ENCODE measurements at regions of chr11 and their contacts with region 1.

Region 1: GRCh38 chr11:88117281-88117858 is 57.9 kb downstream of the RAB38 start:
- DNase-seq: no peak
- H3K4me3 ChIP-seq: no peak overlapping the region
- H3K27ac ChIP-seq: no peak overlapping the region
- H3K4me1 ChIP-seq: no peaks in the 10 kb centered on the region
- H3K27me3 ChIP-seq: no peaks in the 10 kb centered on the region
- CTCF ChIP-seq: no peak

Region 2: GRCh38 chr11:88174709-88175568 is 57.6 kb after region 1 on chr11 and contains the start of gene RAB38:
- intact Hi-C with region 1: no loop called
- DNase-seq: peak; percentile 61
- H3K4me3 ChIP-seq: peak within 1 kb of the TSS; percentile 38
- H3K27ac ChIP-seq: no peak within 1 kb of the TSS
- H3K4me1 ChIP-seq: no peaks in the 10 kb centered on the region
- H3K27me3 ChIP-seq: no peaks in the 10 kb centered on the region
- CTCF ChIP-seq: no peak
- total RNA-seq, gene RAB38: 1.6 to 4.9 TPM

Region 3: DNA sequence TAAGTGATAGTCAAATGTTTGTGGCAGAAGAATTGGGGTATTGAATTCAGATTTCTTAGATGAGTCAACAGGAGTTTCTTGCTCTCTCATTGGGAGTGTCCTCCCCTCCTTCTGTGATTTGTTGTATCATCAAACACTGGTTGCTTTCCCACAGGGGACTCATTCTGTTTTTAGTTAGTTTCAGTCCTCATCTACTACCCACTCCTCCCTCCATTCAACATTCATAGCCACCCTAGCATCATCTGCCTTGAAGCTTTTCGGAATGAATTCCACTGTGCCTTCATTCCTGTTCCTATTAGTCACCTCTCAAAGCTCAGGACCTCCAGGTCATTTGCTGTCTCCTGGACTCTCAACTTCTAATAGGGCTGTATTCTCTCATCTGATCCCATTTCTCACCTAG is 89.4 kb after region 1 on chr11:
- intact Hi-C with region 1: no loop called
- DNase-seq: no peak
- H3K4me3 ChIP-seq: no peak overlapping the region
- H3K27ac ChIP-seq: no peak overlapping the region
- H3K4me1 ChIP-seq: no peaks in the 10 kb centered on the region
- H3K27me3 ChIP-seq: no peaks in the 10 kb centered on the region
- CTCF ChIP-seq: no peak

Region 4: GRCh38 chr11:88535916-88536547 is 418.7 kb after region 1 on chr11:
- intact Hi-C with region 1: loop called (anchors 10 kb)
- DNase-seq: no peak
- H3K4me3 ChIP-seq: no peak overlapping the region
- H3K27ac ChIP-seq: no peak overlapping the region
- H3K4me1 ChIP-seq: no peaks in the 10 kb centered on the region
- H3K27me3 ChIP-seq: no peaks in the 10 kb centered on the region
- CTCF ChIP-seq: no peak